ENCODE measurements at regions of chr16 and their contacts with region 1.

Region 1: GRCh38 chr16:30499284-30499683 is 26.7 kb downstream of the ITGAL start:
- DNase-seq: no peak
- H3K4me3 ChIP-seq: no peak overlapping the region
- H3K4me3 Mint-ChIP-seq: no peak overlapping the region
- H3K27ac ChIP-seq: peak overlapping the region; percentile 51
- H3K27ac Mint-ChIP-seq: peak overlapping the region in 6 of 8 donors; percentile 23 to 51 (median 44)
- H3K4me1 ChIP-seq: no peaks in the 10 kb centered on the region
- H3K4me1 Mint-ChIP-seq: peaks cover 8 to 14% (median 12%) of the 10 kb centered on the region in 3 donors
- H3K27me3 ChIP-seq: no peaks in the 10 kb centered on the region
- H3K27me3 Mint-ChIP-seq: peaks cover 0 to 2% of the 10 kb centered on the region in 2 donors

Region 2: GRCh38 chr16:30458561-30459394 is 40.5 kb before region 1 on chr16:
- CTCF ChIA-PET with region 1: no interaction called
- POLR2A ChIA-PET with region 1: interaction called, 10 read pairs
- DNase-seq: peak; percentile 50 to 89 (median 71)
- H3K4me3 ChIP-seq: peak overlapping the region; percentile 18
- H3K4me3 Mint-ChIP-seq: peak overlapping the region; percentile 41 to 82 (median 70)
- H3K27ac ChIP-seq: no peak overlapping the region
- H3K27ac Mint-ChIP-seq: peak overlapping the region; percentile 68 to 95 (median 89)
- H3K4me1 ChIP-seq: peaks cover 25% of the 10 kb centered on the region
- H3K4me1 Mint-ChIP-seq: peaks cover 41 to 72% (median 63%) of the 10 kb centered on the region in 3 donors
- H3K27me3 ChIP-seq: no peaks in the 10 kb centered on the region
- H3K27me3 Mint-ChIP-seq: no peaks in the 10 kb centered on the region

Region 3: DNA sequence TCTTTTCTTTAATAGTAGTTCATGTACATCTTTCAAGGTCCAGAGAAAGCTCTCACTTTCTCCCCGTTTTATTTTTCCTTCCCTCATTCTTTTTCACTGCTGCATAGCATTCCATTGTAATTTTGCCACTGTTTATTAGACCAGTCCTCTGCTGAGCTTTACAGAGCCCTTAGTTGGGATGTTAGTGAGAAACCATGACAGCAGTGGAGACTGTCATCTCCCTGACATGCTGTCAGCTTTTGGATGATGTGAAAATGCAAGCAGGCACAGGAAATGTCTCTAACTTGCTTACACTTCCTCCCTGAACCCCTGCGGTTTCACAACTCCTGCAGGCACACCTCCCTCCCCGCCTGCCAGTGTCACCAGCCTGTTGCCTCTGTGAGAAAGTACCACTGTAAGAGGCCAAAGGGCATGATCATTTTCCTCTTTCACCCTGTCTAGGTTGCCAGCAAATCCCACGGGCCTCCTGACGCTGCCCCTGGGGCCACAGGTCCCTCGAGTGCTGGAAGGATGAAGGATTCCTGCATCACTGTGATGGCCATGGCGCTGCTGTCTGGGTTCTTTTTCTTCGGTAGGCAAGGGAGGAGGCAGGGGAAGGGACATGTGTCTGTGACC is 26.8 kb before region 1 on chr16 and contains the start of gene ITGAL:
- CTCF ChIA-PET with region 1: interaction called, 5 read pairs
- POLR2A ChIA-PET with region 1: interaction called, 13 read pairs
- DNase-seq: peak; percentile 76 to 93 (median 84)
- H3K4me3 ChIP-seq: peak within 1 kb of the TSS; percentile 91
- H3K4me3 Mint-ChIP-seq: peak within 1 kb of the TSS; percentile 96 to 100 (median 98)
- H3K27ac ChIP-seq: peak within 1 kb of the TSS; percentile 74
- H3K27ac Mint-ChIP-seq: peak within 1 kb of the TSS; percentile 94 to 99 (median 97)
- H3K4me1 ChIP-seq: peaks cover 65% of the 10 kb centered on the region
- H3K4me1 Mint-ChIP-seq: peaks cover 54 to 76% (median 56%) of the 10 kb centered on the region in 3 donors
- H3K27me3 ChIP-seq: no peaks in the 10 kb centered on the region
- H3K27me3 Mint-ChIP-seq: peaks cover 0 to 1% of the 10 kb centered on the region in 2 donors
- total RNA-seq, gene ITGAL: 333 to 363 TPM

Region 4: DNA sequence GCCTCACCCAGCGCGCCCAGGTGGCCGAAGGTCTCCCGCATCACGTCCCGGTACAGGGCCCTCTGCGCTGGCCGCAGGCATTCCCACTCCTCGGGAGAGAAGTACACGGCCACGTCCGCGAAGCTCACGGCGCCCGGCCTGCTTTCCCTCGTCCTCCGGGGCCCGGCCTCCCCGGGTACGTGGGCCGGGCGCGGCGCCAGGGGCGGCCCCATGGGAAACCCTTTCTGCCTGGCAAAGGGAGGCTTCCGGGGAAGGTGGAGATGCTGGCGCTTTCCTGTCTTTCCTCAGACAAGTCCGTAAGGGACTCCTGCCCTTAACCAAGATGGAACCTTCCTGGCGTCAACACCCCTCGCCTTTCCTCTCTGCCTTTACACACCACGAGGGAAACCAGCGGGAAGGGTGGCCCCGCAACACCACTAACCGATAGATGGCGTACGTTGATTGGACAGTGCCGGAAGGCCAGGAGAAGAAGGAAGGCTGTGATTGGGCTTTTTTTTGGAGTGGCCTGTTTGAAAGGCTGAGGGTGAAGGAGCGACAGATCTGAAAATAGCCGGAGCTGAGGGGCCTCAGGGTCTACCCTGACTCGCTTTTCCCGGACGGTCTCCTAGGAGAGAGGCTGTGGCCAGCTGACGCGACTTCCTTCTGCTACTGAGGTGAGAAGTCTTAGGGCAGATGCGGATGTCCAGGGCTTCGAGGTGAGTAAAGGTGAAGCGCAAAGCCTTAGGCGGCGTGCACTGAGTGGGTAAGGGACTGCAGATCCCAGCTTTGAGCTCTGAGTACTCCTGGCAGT is 86.3 kb after region 1 on chr16 and contains the start of gene ZNF785:
- CTCF ChIA-PET with region 1: no interaction called
- POLR2A ChIA-PET with region 1: interaction called, 10 read pairs
- DNase-seq: peak; percentile 83 to 96 (median 92)
- H3K4me3 ChIP-seq: peak within 1 kb of the TSS; percentile 95
- H3K4me3 Mint-ChIP-seq: peak within 1 kb of the TSS; percentile 81 to 91 (median 88)
- H3K27ac ChIP-seq: peak within 1 kb of the TSS; percentile 71
- H3K27ac Mint-ChIP-seq: peak within 1 kb of the TSS; percentile 72 to 92 (median 90)
- H3K4me1 ChIP-seq: peaks cover 12% of the 10 kb centered on the region
- H3K4me1 Mint-ChIP-seq: peaks cover 24 to 32% (median 29%) of the 10 kb centered on the region in 3 donors
- H3K27me3 ChIP-seq: no peaks in the 10 kb centered on the region
- H3K27me3 Mint-ChIP-seq: peaks cover 0 to 3% of the 10 kb centered on the region in 2 donors
- total RNA-seq, gene ZNF785: 10.9 to 13.0 TPM

Region 5: GRCh38 chr16:30669896-30670797 is 170.9 kb after region 1 on chr16:
- CTCF ChIA-PET with region 1: no interaction called
- POLR2A ChIA-PET with region 1: interaction called, 10 read pairs
- DNase-seq: no peak
- H3K4me3 ChIP-seq: no peak overlapping the region
- H3K4me3 Mint-ChIP-seq: no peak overlapping the region
- H3K27ac ChIP-seq: no peak overlapping the region
- H3K27ac Mint-ChIP-seq: peak overlapping the region in 1 of 8 donors; percentile 66
- H3K4me1 ChIP-seq: no peaks in the 10 kb centered on the region
- H3K4me1 Mint-ChIP-seq: peaks cover 4 to 17% (median 4%) of the 10 kb centered on the region in 3 donors
- H3K27me3 ChIP-seq: no peaks in the 10 kb centered on the region
- H3K27me3 Mint-ChIP-seq: no peaks in the 10 kb centered on the region

Measured in CD8-positive, alpha-beta memory T cell (primary cell).